ENCODE measurements at regions of chr1 and their contacts with region 1.

Region 1: DNA sequence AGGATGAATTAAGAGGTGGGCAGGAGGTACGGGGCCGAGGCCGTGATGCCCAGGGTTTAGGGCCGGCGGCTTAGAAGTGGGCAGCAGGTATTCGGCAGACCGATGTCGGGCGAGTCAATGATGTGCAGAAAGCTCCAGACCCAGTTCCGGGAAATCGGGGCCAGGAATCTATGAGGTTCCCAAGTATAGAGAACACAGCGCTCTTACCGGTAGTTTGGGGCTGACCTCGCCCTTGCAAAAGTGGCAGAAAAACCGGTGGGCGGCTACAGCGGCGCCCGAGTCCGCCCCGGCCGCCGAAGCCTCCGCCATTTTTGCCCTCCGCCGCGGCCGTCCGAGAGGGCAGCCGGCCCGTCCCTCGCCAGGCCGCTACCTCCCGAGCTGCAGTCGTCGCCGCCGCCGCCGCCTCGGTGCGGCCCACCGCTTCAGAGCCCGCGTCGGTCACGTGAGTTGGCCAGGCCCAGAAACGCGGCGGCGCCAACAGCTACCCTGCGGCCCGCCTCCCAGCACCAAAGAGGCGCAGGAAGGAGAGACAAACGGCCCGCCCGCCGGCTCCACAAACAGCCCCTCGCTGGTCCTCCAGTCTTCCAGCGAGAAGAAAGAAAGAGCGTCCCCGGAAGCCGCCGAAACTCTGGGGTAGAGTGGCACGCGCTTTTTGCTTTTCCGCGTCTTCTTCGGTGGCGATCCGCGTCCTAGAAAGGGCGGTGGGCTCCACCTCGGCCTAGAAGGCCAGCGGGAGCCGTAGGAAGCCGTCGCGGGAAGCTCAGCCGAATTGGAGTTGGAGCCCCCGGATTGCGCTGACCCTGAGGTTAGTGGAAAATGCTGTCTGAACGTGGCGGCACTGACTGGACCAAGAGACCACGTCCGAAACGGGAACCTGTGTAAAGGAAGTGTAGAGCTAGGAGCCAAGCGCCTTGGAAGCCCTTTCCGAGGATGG is at the starts of genes POLR3C and RNF115:
- DNase-seq: peak; percentile 70
- ATAC-seq: peak; percentile 95
- H3K4me3 ChIP-seq: peak within 1 kb of the TSS; percentile 71 to 84
- H3K27ac ChIP-seq: peak within 1 kb of the TSS; percentile 83
- H3K4me1 ChIP-seq: peaks cover 7 to 13% of the 10 kb centered on the region in 2 experiments; a peak in 3 of 4 replicates
- H3K27me3 ChIP-seq: no peaks in the 10 kb centered on the region
- CTCF ChIP-seq: no peak
- POLR2A ChIP-seq: peak; percentile 62
- RAD21 ChIP-seq: no peak; the same call in 1 of the 2 replicates
- total RNA-seq, gene POLR3C: 25.4 TPM
- total RNA-seq, gene RNF115: 9.5 TPM

Region 2: DNA sequence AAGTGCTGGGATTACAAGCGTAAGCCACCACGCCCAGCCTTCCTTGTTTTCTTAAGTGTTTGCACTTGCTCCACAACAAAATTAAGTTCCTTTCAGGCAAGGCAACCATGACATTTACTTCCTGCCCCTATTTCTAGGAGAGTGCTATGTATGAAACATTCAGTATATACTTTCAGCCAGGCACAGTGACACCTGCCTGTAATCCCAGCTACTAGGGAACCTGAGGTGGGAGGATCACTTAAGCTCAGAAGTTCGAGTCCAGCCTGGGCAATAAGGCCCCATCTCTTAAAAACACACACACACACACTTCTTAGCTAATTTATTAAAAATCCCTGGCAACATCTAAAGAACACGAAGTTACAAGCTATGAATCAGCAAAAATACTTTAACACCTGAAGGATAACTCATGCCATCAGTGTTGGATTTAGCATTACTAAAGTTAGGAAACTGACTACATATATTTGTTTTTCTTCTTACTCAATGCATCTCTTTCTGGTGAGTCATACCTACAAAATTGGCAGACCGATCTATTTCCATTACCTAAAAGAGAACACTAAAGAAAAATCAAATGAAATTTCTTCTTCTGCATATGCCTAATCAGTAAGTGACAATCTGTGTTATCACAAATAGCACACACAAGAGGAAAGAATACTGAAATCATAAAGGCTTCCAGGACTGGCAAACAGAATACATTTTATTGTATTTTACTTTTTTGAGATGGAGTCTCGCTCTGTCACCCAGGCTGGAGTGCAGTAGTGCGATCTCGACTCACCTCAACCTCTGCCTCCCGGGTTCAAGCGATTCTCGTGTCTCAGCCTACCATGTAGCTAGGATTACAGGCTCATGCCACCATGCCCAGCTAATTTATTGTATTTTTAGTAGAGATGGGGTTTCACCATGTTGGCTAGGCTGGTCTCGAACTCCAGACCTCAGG is 41.4 kb before region 1 on chr1:
- CTCF ChIA-PET with region 1: no interaction called
- POLR2A ChIA-PET with region 1: no interaction called
- RAD21 ChIA-PET with region 1: no interaction called
- intact Hi-C with region 1: loop called (anchors 5 kb)
- DNase-seq: peak; percentile 77
- ATAC-seq: peak; percentile 85
- H3K4me3 ChIP-seq: peak overlapping the region in 1 of 2 experiments; percentile 29; a peak in 2 of 4 replicates
- H3K27ac ChIP-seq: peak overlapping the region; percentile 63
- H3K4me1 ChIP-seq: peaks cover 29 to 38% of the 10 kb centered on the region in 2 experiments
- H3K27me3 ChIP-seq: no peaks in the 10 kb centered on the region
- CTCF ChIP-seq: no peak
- POLR2A ChIP-seq: no peak
- RAD21 ChIP-seq: no peak

Measured in HCT116 (cell line).